Activated T-helper 2 cell treated with anti-CD3 and anti-CD28 coated beads, Interferon-gamma antibody, Interleukin-2, Interleukin-4, amounts not matched to agents 10 μg/mL and 5 μg/mL and 100 μg/mL, durations not matched to agents 14 hours and 24 hours and 36 hours (primary cell): ENCODE measurements at regions of chr4 and their contacts with region 1.

Region 1: DNA sequence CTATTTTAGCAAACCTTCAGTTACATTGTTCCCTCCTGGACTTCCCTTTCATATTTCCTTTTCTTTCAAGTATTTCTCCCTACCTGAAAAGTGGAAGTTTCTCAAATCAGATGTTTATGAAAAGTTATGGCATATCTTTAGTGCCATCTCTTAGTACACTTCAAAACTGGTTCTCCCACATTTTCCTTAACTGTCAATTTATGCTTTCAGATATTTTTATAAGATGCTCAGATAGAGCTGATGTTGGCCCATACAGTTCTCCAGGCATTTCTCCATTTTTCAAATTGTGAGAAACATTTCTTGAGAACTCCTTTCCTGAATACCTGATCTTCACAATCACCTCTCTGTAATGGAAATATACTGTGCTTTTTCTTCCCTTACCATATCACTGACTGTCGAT is 32.5 kb upstream of the AP1AR start:
- DNase-seq: no peak
- H3K4me3 Mint-ChIP-seq: no peak overlapping the region
- H3K27ac Mint-ChIP-seq: no peak overlapping the region
- H3K4me1 Mint-ChIP-seq: peaks cover 17% of the 10 kb centered on the region
- H3K27me3 Mint-ChIP-seq: peaks cover 2% of the 10 kb centered on the region

Region 2: GRCh38 chr4:112099701-112100297 is 99.2 kb before region 1 on chr4:
- intact Hi-C with region 1: loop called (anchors 5 kb)
- DNase-seq: no peak
- H3K4me3 Mint-ChIP-seq: no peak overlapping the region
- H3K27ac Mint-ChIP-seq: no peak overlapping the region
- H3K4me1 Mint-ChIP-seq: peaks cover 5% of the 10 kb centered on the region
- H3K27me3 Mint-ChIP-seq: peaks cover 22% of the 10 kb centered on the region

Region 3: GRCh38 chr4:112119353-112119783 is 79.7 kb before region 1 on chr4:
- intact Hi-C with region 1: loop called (anchors 1 kb)
- DNase-seq: peak; percentile 36
- H3K4me3 Mint-ChIP-seq: no peak overlapping the region
- H3K27ac Mint-ChIP-seq: peak overlapping the region; percentile 91
- H3K4me1 Mint-ChIP-seq: peaks cover 22% of the 10 kb centered on the region
- H3K27me3 Mint-ChIP-seq: peaks cover 14% of the 10 kb centered on the region

Region 4: DNA sequence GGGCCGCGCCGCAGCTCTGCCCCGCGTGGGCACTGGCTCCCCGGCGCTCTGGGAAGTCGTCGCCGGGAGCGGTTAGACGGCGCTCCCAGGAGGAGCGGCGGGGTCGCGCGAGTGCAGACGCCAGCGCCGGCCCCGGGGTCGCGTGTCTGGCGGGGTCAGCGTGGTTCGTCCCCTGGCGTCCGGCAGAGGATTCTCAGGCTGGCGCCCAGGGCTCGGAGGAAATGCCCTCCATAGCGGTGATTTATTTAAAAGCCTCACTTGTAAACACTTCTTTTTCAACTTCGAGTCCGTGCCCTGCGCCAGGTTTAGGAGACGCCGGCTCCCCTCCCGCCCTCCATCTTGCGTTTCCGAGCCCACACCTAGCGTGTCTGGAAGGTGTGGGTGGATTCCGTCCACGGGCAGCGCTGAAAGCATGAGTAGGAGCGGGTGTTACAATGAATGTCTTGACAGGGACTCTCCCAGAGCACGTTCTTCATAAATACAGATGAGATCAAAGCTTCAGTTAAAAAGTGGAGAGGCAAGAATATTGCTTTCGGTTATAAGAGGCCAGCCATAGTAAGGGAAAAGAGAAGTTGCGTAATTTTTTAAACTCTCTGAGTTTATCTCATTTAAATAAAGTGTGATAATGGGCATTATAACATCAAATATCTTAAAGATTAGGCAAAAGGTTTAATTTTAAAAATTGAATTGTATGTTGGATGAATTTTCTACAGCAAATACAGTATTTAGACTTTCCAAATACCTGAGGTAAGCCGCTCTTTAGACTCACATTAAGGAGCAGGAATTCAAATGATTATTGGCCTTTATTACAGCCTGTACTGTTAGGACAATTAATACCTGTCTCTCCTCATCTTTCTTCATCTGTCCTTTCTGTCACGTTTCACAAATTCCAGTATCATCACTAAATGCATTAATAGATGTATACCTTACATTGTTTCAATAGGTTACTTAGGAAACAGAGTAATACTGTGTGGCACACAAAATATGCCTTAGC is 52.9 kb before region 1 on chr4:
- intact Hi-C with region 1: loop called (anchors 1 kb)
- DNase-seq: peak; percentile 44
- H3K4me3 Mint-ChIP-seq: peak overlapping the region; percentile 85
- H3K27ac Mint-ChIP-seq: peak overlapping the region; percentile 92
- H3K4me1 Mint-ChIP-seq: peaks cover 35% of the 10 kb centered on the region
- H3K27me3 Mint-ChIP-seq: no peaks in the 10 kb centered on the region

Region 5: GRCh38 chr4:112156553-112156952 is 42.5 kb before region 1 on chr4:
- intact Hi-C with region 1: no loop called
- DNase-seq: no peak
- H3K4me3 Mint-ChIP-seq: no peak overlapping the region
- H3K27ac Mint-ChIP-seq: no peak overlapping the region
- H3K4me1 Mint-ChIP-seq: peaks cover 25% of the 10 kb centered on the region
- H3K27me3 Mint-ChIP-seq: no peaks in the 10 kb centered on the region

Region 6: GRCh38 chr4:112183252-112183651 is 15.8 kb before region 1 on chr4:
- intact Hi-C with region 1: loop called (anchors 2 kb)
- DNase-seq: no peak
- H3K4me3 Mint-ChIP-seq: no peak overlapping the region
- H3K27ac Mint-ChIP-seq: peak overlapping the region; percentile 35
- H3K4me1 Mint-ChIP-seq: peaks cover 34% of the 10 kb centered on the region
- H3K27me3 Mint-ChIP-seq: no peaks in the 10 kb centered on the region

Region 7: GRCh38 chr4:112238833-112239232 is 39.8 kb after region 1 on chr4:
- intact Hi-C with region 1: no loop called
- DNase-seq: no peak
- H3K4me3 Mint-ChIP-seq: no peak overlapping the region
- H3K27ac Mint-ChIP-seq: no peak overlapping the region
- H3K4me1 Mint-ChIP-seq: peaks cover 18% of the 10 kb centered on the region
- H3K27me3 Mint-ChIP-seq: no peaks in the 10 kb centered on the region